ENCODE measurements at regions of chr6 and their contacts with region 1.

Region 1: GRCh38 chr6:148177589-148178233 is 164.9 kb upstream of the SASH1 start:
- DNase-seq: peak; percentile 69
- H3K4me3 ChIP-seq: no peak overlapping the region
- H3K27ac ChIP-seq: no peak overlapping the region
- H3K4me1 ChIP-seq: no peaks in the 10 kb centered on the region
- H3K27me3 ChIP-seq: no peaks in the 10 kb centered on the region
- CTCF ChIP-seq: peak; percentile 90

Region 2: GRCh38 chr6:148250975-148251685 is 73.4 kb after region 1 on chr6:
- intact Hi-C with region 1: loop called (anchors 5 kb)
- DNase-seq: no peak
- H3K4me3 ChIP-seq: no peak overlapping the region
- H3K27ac ChIP-seq: peak overlapping the region; percentile 39
- H3K4me1 ChIP-seq: peaks cover 30% of the 10 kb centered on the region
- H3K27me3 ChIP-seq: no peaks in the 10 kb centered on the region
- CTCF ChIP-seq: peak; percentile 61

Region 3: GRCh38 chr6:148464319-148465010 is 286.8 kb after region 1 on chr6:
- intact Hi-C with region 1: loop called (anchors 2 kb)
- DNase-seq: peak; percentile 62
- H3K4me3 ChIP-seq: no peak overlapping the region
- H3K27ac ChIP-seq: peak overlapping the region; percentile 53
- H3K4me1 ChIP-seq: peaks cover 65% of the 10 kb centered on the region
- H3K27me3 ChIP-seq: no peaks in the 10 kb centered on the region
- CTCF ChIP-seq: peak; percentile 96

Region 4: DNA sequence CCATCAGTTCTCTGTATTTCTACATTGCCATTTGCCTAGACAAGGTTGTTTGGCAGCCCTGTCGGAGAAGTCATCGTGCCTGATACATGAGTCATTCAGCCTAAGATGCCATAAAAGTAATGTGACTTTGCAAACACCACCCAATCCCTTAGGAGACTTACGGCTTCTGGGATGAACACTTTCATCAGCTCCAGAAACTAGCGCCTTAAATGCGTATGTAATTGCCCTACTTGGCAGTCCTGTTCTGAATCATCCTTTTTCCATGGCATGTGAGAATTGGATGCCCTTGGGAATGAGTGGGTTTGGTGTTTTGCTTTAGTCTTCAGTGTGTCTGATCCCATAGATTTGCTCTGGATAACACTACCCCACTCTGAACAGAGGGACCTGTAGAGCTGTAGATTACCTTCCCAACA is 323.5 kb after region 1 on chr6:
- intact Hi-C with region 1: no loop called
- DNase-seq: no peak
- H3K4me3 ChIP-seq: no peak overlapping the region
- H3K27ac ChIP-seq: peak overlapping the region; percentile 85
- H3K4me1 ChIP-seq: peaks cover 63% of the 10 kb centered on the region
- H3K27me3 ChIP-seq: no peaks in the 10 kb centered on the region
- CTCF ChIP-seq: no peak